Endothelial cell of umbilical vein (primary cell): ENCODE measurements at regions of chr14 and their contacts with region 1.

Region 1: GRCh38 chr14:29927376-29928116 is at the start of gene PRKD1:
- DNase-seq: peak; percentile 62
- H3K4me3 ChIP-seq: peak within 1 kb of the TSS; percentile 56 to 73 (median 57)
- H3K27ac ChIP-seq: peak within 1 kb of the TSS; percentile 31
- H3K4me1 ChIP-seq: peaks cover 13% of the 10 kb centered on the region
- H3K27me3 ChIP-seq: peaks cover 0 to 2% of the 10 kb centered on the region in 2 experiments
- CTCF ChIP-seq: peak in 1 of 2 donors; percentile 22
- POLR2A ChIP-seq: no peak
- total RNA-seq, gene PRKD1: 10.3 and 10.9 TPM in 2 replicates

Region 2: DNA sequence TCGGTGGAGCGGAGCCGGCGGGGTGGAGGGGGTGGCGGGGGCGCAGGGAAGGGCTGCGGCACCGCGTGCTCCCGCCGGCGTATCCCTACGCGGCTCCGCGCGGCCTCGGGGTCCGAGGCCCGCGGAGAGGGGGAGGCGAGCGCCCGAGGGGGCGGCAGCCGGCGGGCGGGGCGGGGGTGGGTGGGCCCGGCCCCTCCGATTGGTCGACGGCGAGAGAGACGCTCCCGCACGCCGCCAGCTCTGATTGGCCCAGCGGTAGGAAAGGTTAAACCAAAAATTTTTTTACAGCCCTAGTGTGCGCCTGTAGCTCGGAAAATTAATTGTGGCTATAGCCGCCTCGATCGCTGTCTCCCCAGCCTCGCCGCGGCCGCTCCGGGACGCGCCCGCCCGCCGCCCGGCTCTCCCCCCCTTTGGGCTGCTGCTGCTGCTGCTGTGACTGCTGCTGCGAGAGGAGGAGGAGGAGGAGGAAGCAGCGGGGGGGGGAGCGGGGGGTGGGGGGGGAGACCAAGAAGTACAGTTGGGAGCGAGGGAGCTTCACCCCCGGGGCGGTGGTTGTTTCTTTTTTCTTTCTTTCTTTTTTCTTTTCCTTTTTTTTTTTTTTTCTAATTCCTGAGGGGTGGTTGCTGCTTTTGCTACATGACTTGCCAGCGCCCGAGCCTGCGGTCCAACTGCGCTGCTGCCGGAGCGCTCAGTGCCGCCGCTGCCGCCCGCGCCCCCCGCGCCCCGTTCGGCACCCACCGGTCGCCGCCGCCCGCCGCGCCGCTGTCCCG is 1160.9 kb before region 1 on chr14 and contains the start of gene FOXG1:
- CTCF ChIA-PET with region 1: interaction called, 3 read pairs
- POLR2A ChIA-PET with region 1: no interaction called
- dilution Hi-C with region 1: no loop called
- intact Hi-C with region 1: loop called (anchors 10 kb)
- DNase-seq: no peak
- H3K4me3 ChIP-seq: peak within 1 kb of the TSS in 2 of 3 experiments; percentile 24 to 29
- H3K27ac ChIP-seq: no peak within 1 kb of the TSS
- H3K4me1 ChIP-seq: peaks cover 5% of the 10 kb centered on the region
- H3K27me3 ChIP-seq: peaks cover 51 to 88% of the 10 kb centered on the region in 2 experiments
- CTCF ChIP-seq: no peak
- POLR2A ChIP-seq: no peak
- total RNA-seq, gene FOXG1: not detected in 2 replicates

Region 3: GRCh38 chr14:29548948-29549370 is 378.6 kb before region 1 on chr14:
- CTCF ChIA-PET with region 1: interaction called, 5 read pairs
- POLR2A ChIA-PET with region 1: no interaction called
- dilution Hi-C with region 1: no loop called
- intact Hi-C with region 1: loop called (anchors 1 kb)
- DNase-seq: peak; percentile 69
- H3K4me3 ChIP-seq: no peak overlapping the region
- H3K27ac ChIP-seq: no peak overlapping the region
- H3K4me1 ChIP-seq: no peaks in the 10 kb centered on the region
- H3K27me3 ChIP-seq: peaks cover 0 to 4% of the 10 kb centered on the region in 2 experiments
- CTCF ChIP-seq: peak; percentile 27 to 41
- POLR2A ChIP-seq: no peak

Region 4: DNA sequence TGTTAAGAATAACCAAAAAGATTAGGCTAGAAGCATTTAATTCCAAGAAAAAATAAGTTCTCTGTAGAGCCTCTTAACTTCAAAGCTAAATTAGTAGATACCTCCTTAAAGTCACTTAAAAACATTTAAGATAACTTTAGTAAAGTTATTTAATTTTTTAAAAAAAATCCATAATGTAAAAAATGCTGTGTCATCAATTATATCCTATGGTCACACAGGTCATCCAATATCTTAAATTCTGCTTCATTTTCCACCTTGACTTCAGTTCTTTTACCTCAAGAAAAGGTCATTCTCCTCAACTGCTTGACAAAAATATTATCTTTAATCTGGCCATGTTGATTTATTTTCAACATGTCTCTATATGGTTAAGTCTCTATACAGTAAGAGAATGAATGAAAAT is 274.2 kb before region 1 on chr14:
- CTCF ChIA-PET with region 1: no interaction called
- POLR2A ChIA-PET with region 1: no interaction called
- dilution Hi-C with region 1: no loop called
- intact Hi-C with region 1: loop called (anchors 1 kb)
- DNase-seq: no peak
- H3K4me3 ChIP-seq: no peak overlapping the region
- H3K27ac ChIP-seq: no peak overlapping the region
- H3K4me1 ChIP-seq: peaks cover 14% of the 10 kb centered on the region
- H3K27me3 ChIP-seq: no peaks in the 10 kb centered on the region
- CTCF ChIP-seq: no peak
- POLR2A ChIP-seq: no peak

Region 5: DNA sequence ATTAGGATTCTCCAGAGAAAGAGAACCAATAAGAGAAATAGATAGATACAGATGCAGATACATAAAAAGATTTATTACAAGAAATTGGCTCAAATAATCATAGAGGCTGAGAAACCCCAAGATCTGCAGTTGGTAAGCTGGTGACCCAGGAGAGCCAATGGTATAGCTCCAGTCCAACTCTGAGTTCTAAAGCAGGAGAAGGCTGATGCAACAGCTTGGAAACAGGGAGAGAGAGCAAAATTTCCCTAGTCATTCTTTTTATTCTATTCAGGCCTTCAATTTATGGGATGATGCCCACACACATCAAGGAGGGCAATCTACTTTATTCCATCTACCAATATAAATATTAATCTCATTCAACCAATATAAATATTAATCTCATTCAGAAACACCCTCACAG is 218.1 kb before region 1 on chr14:
- CTCF ChIA-PET with region 1: no interaction called
- POLR2A ChIA-PET with region 1: no interaction called
- dilution Hi-C with region 1: no loop called
- intact Hi-C with region 1: no loop called
- DNase-seq: no peak
- H3K4me3 ChIP-seq: no peak overlapping the region
- H3K27ac ChIP-seq: no peak overlapping the region
- H3K4me1 ChIP-seq: no peaks in the 10 kb centered on the region
- H3K27me3 ChIP-seq: no peaks in the 10 kb centered on the region
- CTCF ChIP-seq: no peak
- POLR2A ChIP-seq: no peak

Region 6: DNA sequence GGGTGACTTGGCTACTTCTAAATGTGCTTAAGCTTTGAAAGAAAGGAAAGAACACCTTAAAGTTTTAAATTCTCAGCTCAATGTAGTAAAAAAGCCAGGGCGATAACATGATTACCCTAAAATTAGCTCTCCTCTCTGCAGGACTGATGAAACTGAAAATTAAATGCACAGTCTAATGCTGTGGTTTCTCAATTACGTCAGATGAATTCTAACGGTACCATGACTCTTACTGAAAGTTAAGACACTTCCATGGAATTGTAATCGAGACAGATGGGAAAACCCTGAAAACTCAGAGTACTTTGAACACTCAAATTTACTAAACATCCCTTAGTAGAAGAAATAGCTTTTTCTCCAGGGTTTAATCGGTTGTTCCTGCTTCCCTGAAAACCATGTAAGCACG is 26.0 kb after region 1 on chr14:
- CTCF ChIA-PET with region 1: no interaction called
- POLR2A ChIA-PET with region 1: no interaction called
- dilution Hi-C with region 1: no loop called
- intact Hi-C with region 1: no loop called
- DNase-seq: no peak
- H3K4me3 ChIP-seq: no peak overlapping the region
- H3K27ac ChIP-seq: no peak overlapping the region
- H3K4me1 ChIP-seq: no peaks in the 10 kb centered on the region
- H3K27me3 ChIP-seq: no peaks in the 10 kb centered on the region
- CTCF ChIP-seq: no peak
- POLR2A ChIP-seq: no peak

Region 7: GRCh38 chr14:30223385-30223813 is 295.9 kb after region 1 on chr14:
- CTCF ChIA-PET with region 1: interaction called, 4 read pairs
- POLR2A ChIA-PET with region 1: no interaction called
- dilution Hi-C with region 1: no loop called
- intact Hi-C with region 1: loop called (anchors 5 kb)
- DNase-seq: peak; percentile 97
- H3K4me3 ChIP-seq: no peak overlapping the region
- H3K27ac ChIP-seq: peak overlapping the region; percentile 74
- H3K4me1 ChIP-seq: peaks cover 58% of the 10 kb centered on the region
- H3K27me3 ChIP-seq: no peaks in the 10 kb centered on the region
- CTCF ChIP-seq: no peak
- POLR2A ChIP-seq: no peak